ENCODE measurements at regions of chr1 and their contacts with region 1.

Region 1: GRCh38 chr1:150162862-150163706 is 13.4 kb downstream of the PLEKHO1 start:
- DNase-seq: peak; percentile 93
- H3K4me3 ChIP-seq: no peak overlapping the region
- H3K27ac ChIP-seq: peak overlapping the region; percentile 75
- H3K4me1 ChIP-seq: peaks cover 41% of the 10 kb centered on the region
- H3K27me3 ChIP-seq: no peaks in the 10 kb centered on the region
- CTCF ChIP-seq: no peak
- POLR2A ChIP-seq: peak; percentile 25

Region 2: GRCh38 chr1:150067184-150068036 is 95.7 kb before region 1 on chr1 and contains the start of gene VPS45:
- CTCF ChIA-PET with region 1: interaction called, 165 read pairs
- POLR2A ChIA-PET with region 1: no interaction called
- dilution Hi-C with region 1: no loop called
- intact Hi-C with region 1: no loop called
- DNase-seq: peak; percentile 93
- H3K4me3 ChIP-seq: peak within 1 kb of the TSS; percentile 45 to 85 (median 72)
- H3K27ac ChIP-seq: peak within 1 kb of the TSS; percentile 53
- H3K4me1 ChIP-seq: peaks cover 24% of the 10 kb centered on the region
- H3K27me3 ChIP-seq: no peaks in the 10 kb centered on the region
- CTCF ChIP-seq: peak; percentile 18 to 36
- POLR2A ChIP-seq: no peak
- total RNA-seq, gene VPS45: 40.4 and 43.7 TPM in 2 replicates

Region 3: DNA sequence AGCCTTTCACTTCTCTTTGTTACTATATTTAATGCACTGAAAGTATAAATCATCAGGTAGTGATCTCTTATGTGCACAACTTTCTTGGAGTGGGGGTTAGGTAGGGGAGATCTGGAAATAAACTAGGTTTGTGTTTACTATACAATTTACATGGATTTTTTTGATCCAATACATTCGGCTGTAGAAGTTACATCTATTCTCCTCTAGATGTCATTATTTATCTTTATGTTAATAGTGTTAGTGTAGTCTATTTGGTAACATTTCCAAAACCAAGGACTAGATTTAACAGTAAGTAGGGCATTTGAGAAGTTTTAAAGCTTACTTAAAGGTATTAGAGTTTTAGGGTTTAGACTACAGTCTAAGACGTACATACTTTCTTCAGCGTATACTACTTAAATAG is 90.1 kb before region 1 on chr1:
- CTCF ChIA-PET with region 1: interaction called, 165 read pairs
- POLR2A ChIA-PET with region 1: no interaction called
- dilution Hi-C with region 1: no loop called
- intact Hi-C with region 1: no loop called
- DNase-seq: peak; percentile 40
- H3K4me3 ChIP-seq: no peak overlapping the region
- H3K27ac ChIP-seq: no peak overlapping the region
- H3K4me1 ChIP-seq: peaks cover 7% of the 10 kb centered on the region
- H3K27me3 ChIP-seq: no peaks in the 10 kb centered on the region
- CTCF ChIP-seq: peak in 1 of 2 donors; percentile 20
- POLR2A ChIP-seq: no peak

Region 4: GRCh38 chr1:150142083-150142482 is 21.0 kb before region 1 on chr1:
- CTCF ChIA-PET with region 1: interaction called, 8 read pairs
- POLR2A ChIA-PET with region 1: interaction called, 7 read pairs
- dilution Hi-C with region 1: no loop called
- intact Hi-C with region 1: loop called (anchors 1 kb)
- DNase-seq: peak; percentile 90
- H3K4me3 ChIP-seq: peak overlapping the region in 1 of 3 experiments; percentile 22
- H3K27ac ChIP-seq: peak overlapping the region; percentile 91
- H3K4me1 ChIP-seq: peaks cover 37% of the 10 kb centered on the region
- H3K27me3 ChIP-seq: no peaks in the 10 kb centered on the region
- CTCF ChIP-seq: no peak
- POLR2A ChIP-seq: no peak